ENCODE measurements at regions of chr11 and their contacts with region 1.

Region 1: DNA sequence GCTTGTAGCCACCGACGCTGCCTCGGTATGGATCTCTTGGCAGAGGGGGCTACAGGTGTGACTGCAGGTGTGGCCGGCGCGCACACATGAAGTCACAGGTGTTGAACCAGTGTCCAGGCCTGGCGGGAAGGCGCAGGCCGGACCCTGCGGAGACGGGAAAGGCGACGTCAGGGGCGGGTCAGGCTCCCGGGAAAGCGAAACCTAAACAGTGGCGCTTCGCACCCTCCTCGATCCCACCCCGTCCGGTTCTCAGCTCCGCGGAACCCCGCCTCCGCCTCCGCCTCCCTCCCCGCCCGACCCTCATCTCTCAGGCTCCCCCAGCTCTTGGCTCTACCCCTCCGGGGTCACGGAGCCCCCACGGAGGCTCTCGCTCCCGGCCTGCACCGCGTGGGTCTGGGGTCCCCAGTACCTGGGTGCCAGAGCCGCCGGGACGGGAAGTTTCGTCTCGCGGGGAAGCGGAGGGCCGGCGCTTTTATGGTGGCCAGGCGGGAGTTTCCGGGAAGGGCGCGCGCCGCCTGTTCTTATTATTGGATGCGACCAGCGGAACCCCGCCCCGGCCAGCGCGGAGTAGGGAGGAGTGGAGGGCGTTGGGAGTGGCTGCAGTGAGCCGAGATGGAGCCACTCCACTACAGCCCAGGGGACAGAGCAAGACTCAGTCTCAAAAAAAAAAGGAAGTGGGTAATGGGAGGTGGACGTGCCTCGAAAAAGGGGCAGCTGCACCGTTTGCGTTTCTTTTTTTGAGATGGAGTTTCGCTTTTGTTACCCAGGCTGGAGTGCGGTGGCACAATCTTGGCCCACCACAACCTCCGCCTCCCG is at the start of gene IRF7:
- DNase-seq: peak; percentile 92
- ATAC-seq: peak; percentile 95
- H3K4me3 Mint-ChIP-seq: peak within 1 kb of the TSS; percentile 90
- H3K27ac Mint-ChIP-seq: peak within 1 kb of the TSS; percentile 88
- H3K4me1 Mint-ChIP-seq: peaks cover 25% of the 10 kb centered on the region
- H3K27me3 Mint-ChIP-seq: no peaks in the 10 kb centered on the region
- CTCF ChIP-seq: no peak
- total RNA-seq, gene IRF7: 74.1 and 75.5 TPM in 2 replicates

Region 2: DNA sequence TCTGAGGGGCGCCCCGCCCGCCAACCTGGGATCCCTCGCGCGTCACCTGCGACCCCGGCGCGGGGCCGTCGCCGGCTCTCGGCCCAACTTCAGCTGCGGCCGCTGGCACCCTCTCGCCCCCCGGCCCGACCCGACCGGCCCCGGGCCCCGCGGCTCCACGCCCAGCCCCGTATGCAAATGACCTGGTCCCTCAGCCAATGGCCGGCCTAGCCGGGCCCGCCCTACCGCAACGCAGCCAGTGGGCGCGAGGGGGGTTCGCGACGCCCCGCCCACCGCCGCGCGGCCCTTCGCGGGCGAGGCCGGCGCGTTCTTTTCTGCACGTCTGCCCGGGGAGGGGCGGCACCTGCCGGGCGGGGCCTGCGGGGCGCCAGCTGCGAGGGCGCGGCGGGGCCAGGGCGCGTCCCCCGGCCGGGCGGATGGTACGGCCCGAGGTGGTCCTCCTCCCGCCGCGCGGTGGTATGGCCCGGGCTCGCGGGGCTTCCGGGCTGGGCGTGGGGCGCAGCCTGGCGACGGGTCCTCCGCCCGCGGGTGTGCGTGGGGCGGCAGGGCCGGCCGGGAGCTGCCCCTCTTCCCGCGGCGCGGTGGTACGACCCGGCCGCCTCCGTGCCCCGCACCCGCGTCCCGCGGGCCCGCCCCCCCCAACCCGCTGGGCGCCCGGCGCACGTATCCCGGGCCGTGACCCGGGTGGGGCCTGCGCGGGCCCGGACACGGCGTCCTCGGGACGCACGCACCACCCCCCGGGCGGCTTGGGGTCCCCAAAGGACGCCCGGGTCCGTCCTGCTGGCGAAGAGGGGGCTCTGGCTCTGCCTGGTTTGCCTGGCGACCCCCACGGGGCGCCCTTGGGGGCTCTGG is 47.2 kb before region 1 on chr11:
- CTCF ChIA-PET with region 1: no interaction called
- POLR2A ChIA-PET with region 1: interaction called, 7 read pairs
- intact Hi-C with region 1: loop called (anchors 2 kb)
- DNase-seq: peak; percentile 96
- ATAC-seq: peak; percentile 93
- H3K4me3 Mint-ChIP-seq: peak overlapping the region; percentile 79
- H3K27ac Mint-ChIP-seq: peak overlapping the region; percentile 41
- H3K4me1 Mint-ChIP-seq: peaks cover 7% of the 10 kb centered on the region
- H3K27me3 Mint-ChIP-seq: no peaks in the 10 kb centered on the region
- CTCF ChIP-seq: no peak

Region 3: GRCh38 chr11:636452-637235 is 20.9 kb after region 1 on chr11:
- CTCF ChIA-PET with region 1: no interaction called
- POLR2A ChIA-PET with region 1: interaction called, 4 read pairs
- intact Hi-C with region 1: loop called (anchors 2 kb)
- DNase-seq: no peak
- ATAC-seq: no peak
- H3K4me3 Mint-ChIP-seq: no peak overlapping the region
- H3K27ac Mint-ChIP-seq: no peak overlapping the region
- H3K4me1 Mint-ChIP-seq: peaks cover 24% of the 10 kb centered on the region
- H3K27me3 Mint-ChIP-seq: peaks cover 23% of the 10 kb centered on the region
- CTCF ChIP-seq: no peak